OCI-LY7 (cell line): ENCODE measurements at regions of chr6 and their contacts with region 1.

Region 1: DNA sequence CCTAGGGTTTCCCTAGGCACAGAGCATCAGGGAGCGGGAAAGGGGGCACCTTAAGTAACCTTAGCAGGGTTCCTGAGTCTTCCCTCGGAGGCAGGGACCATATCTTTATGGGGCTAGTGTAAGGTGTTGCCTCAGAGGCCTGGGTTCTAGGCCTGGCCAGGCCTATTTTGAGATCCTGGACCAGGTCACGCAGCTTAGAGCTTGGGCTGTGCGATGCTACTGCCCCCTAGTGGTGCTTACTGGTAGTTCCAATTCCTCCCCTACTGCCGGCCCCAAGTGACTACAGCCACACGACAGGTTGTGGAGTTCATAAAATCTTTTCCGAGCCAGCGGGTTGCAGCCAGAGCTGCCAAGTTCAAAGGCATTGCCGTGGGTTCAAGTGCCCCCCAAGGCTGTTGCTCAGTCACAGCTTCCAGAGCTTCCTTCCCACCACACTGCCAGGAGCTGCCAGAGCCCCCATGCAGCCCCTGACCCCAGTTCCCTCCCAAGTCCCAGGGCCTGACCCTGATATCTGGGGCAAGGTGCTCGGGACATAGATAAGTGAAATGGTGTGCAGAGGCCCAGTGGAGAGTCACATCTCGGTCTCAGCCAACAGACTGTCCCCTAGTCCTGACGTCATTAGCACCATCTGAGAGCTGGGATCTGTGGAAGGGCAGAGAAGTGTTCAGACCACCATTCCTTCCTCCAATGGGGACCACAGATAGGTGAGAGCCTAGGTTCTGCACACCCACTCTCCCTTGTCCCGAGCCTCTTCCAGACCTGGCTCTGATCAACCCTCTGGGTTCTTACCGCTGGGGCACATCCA is 3.3 kb downstream of the LRRC73 start:
- DNase-seq: peak; percentile 82
- H3K4me3 ChIP-seq: no peak overlapping the region
- H3K27ac ChIP-seq: no peak overlapping the region
- H3K4me1 ChIP-seq: no peaks in the 10 kb centered on the region
- CTCF ChIP-seq: peak; percentile 94

Region 2: GRCh38 chr6:43070028-43070632 is 436.7 kb before region 1 on chr6:
- CTCF ChIA-PET with region 1: no interaction called
- POLR2A ChIA-PET with region 1: no interaction called
- intact Hi-C with region 1: loop called (anchors 10 kb)
- DNase-seq: peak; percentile 73
- H3K4me3 ChIP-seq: no peak overlapping the region
- H3K27ac ChIP-seq: no peak overlapping the region
- H3K4me1 ChIP-seq: peaks cover 9% of the 10 kb centered on the region
- CTCF ChIP-seq: peak; percentile 85

Region 3: GRCh38 chr6:43263314-43264178 is 243.3 kb before region 1 on chr6:
- CTCF ChIA-PET with region 1: no interaction called
- POLR2A ChIA-PET with region 1: interaction called, 5 read pairs
- intact Hi-C with region 1: loop called (anchors 1 kb)
- DNase-seq: peak; percentile 83
- H3K4me3 ChIP-seq: no peak overlapping the region
- H3K27ac ChIP-seq: no peak overlapping the region
- H3K4me1 ChIP-seq: no peaks in the 10 kb centered on the region
- CTCF ChIP-seq: peak; percentile 94